ENCODE measurements at regions of chr6 and their contacts with region 1.

Region 1: GRCh38 chr6:7535498-7535897 is 6.0 kb upstream of the DSP start:
- DNase-seq: no peak
- H3K4me3 ChIP-seq: no peak overlapping the region
- H3K27ac ChIP-seq: no peak overlapping the region
- H3K4me1 ChIP-seq: no peaks in the 10 kb centered on the region
- H3K27me3 ChIP-seq: peaks cover 20% of the 10 kb centered on the region
- CTCF ChIP-seq: no peak

Region 2: GRCh38 chr6:7479801-7480266 is 55.7 kb before region 1 on chr6:
- CTCF ChIA-PET with region 1: no interaction called
- POLR2A ChIA-PET with region 1: no interaction called
- intact Hi-C with region 1: no loop called
- DNase-seq: peak; percentile 34
- H3K4me3 ChIP-seq: no peak overlapping the region
- H3K27ac ChIP-seq: no peak overlapping the region
- H3K4me1 ChIP-seq: no peaks in the 10 kb centered on the region
- H3K27me3 ChIP-seq: no peaks in the 10 kb centered on the region
- CTCF ChIP-seq: no peak

Region 3: DNA sequence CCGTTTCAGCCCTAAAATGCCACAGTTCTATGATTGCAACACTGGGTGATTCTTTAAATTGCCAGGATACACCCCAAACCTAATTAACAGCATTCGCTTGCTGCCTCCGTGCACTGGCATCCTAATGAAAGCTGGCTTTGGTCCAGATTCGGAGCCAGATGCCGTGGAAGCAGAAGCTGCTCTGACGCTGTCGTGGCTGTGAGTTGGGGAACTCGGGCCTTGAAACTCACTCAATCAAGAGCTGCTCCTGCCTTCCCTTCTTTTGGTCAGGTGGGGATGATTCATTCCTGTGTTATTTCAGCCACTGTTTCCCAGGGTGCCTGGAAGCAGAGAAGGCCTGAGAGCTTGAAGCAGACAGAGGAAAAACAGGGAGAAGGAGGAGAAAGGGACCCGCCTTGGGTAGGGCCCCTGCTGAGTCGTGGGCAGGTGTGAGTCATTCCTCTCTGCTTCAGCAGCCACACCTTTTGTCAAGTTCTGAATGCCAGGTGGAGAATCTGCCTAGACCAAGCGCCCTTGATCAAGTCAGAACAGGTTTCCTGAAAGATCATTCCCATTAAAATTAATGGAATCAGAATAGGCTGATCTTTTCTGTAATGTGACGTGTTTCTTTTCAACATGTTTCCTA is 30.2 kb before region 1 on chr6:
- CTCF ChIA-PET with region 1: no interaction called
- POLR2A ChIA-PET with region 1: no interaction called
- intact Hi-C with region 1: no loop called
- DNase-seq: peak; percentile 55
- H3K4me3 ChIP-seq: no peak overlapping the region
- H3K27ac ChIP-seq: no peak overlapping the region
- H3K4me1 ChIP-seq: no peaks in the 10 kb centered on the region
- H3K27me3 ChIP-seq: no peaks in the 10 kb centered on the region
- CTCF ChIP-seq: no peak

Region 4: DNA sequence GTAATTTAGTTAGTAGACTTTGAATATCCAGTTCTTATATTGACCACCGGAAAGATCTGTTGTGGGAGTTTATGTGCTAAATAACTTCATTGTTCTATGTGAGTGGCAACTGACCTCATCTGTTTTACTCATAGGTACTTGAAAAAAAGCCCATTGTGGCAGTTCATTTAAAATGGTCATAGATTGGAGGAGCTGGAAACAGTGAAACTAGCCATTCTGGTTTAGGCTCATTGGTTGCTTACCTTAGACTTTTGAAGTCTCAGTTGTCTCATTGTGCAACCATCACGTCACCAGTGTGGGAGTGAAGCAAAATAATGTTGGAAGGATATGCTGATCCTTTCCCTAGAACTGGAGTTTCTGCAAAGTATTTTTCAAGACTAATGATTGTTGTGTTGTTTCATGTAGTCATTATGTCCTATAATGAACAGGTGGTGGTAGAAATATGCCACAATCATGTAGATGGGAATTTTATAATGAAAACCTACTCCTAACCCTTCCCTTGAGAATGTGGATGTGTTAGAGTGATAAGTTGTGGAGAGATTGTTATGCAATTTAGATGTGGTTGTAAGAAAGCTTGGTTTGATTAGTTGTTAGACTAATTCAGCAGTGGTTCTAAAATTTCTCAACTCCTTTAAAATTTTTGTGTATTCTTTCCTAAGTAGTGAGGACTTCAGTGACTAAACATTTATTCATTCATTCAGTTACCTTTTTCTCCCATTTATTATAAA is 24.3 kb after region 1 on chr6:
- CTCF ChIA-PET with region 1: no interaction called
- POLR2A ChIA-PET with region 1: interaction called, 14 read pairs
- intact Hi-C with region 1: no loop called
- DNase-seq: no peak
- H3K4me3 ChIP-seq: no peak overlapping the region
- H3K27ac ChIP-seq: no peak overlapping the region
- H3K4me1 ChIP-seq: no peaks in the 10 kb centered on the region
- H3K27me3 ChIP-seq: peaks cover 2% of the 10 kb centered on the region
- CTCF ChIP-seq: no peak